Activated CD4-positive, alpha-beta T cell treated with anti-CD3 and anti-CD28 coated beads, Interleukin-2, amount 10 ng/mL, durations not matched to agents 7 days and 5 days (primary cell): ENCODE measurements at regions of chr17 and their contacts with region 1.

Region 1: DNA sequence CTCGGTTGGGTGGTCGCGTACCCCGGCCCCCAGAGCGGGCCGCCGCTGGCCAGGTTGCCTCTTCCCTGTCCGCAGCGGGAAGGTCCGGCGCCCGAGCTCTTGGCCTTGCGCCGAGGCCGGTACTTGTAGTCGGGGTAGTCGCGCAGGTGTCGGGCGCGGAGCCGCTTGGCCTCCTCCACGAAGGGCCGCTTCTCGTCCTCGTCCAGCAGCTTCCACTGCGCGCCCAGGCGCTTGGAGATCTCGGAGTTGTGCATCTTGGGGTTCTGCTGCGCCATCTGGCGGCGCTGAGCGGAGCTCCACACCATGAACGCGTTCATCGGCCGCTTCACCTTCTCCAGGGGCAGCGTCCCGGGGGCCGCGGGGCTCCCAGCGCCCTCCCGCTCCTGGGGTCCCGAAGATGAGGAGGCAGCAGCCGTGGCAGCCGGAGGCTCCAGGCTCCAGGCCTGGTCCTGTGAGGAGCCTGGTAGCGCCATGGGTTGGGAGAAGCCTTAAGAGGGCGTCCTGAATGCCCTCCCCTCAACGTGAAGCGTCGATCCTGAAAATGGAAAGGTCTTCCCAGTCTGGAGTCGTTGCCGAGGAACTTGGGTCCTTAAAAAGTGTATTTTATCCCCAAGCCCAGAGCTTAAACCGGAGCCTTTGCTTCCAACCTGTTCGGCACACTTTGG is 558 bp downstream of the SOX15 start:
- DNase-seq: peak; percentile 74
- H3K4me3 Mint-ChIP-seq: no peak overlapping the region
- H3K27ac Mint-ChIP-seq: no peak overlapping the region
- H3K4me1 Mint-ChIP-seq: peaks cover 19% of the 10 kb centered on the region
- H3K27me3 Mint-ChIP-seq: no peaks in the 10 kb centered on the region

Region 2: GRCh38 chr17:7515911-7516610 is 73.3 kb before region 1 on chr17:
- CTCF ChIA-PET with region 1: interaction called, 18 read pairs
- POLR2A ChIA-PET with region 1: no interaction called
- DNase-seq: no peak
- H3K4me3 Mint-ChIP-seq: no peak overlapping the region
- H3K27ac Mint-ChIP-seq: no peak overlapping the region
- H3K4me1 Mint-ChIP-seq: peaks cover 4% of the 10 kb centered on the region
- H3K27me3 Mint-ChIP-seq: no peaks in the 10 kb centered on the region

Region 3: DNA sequence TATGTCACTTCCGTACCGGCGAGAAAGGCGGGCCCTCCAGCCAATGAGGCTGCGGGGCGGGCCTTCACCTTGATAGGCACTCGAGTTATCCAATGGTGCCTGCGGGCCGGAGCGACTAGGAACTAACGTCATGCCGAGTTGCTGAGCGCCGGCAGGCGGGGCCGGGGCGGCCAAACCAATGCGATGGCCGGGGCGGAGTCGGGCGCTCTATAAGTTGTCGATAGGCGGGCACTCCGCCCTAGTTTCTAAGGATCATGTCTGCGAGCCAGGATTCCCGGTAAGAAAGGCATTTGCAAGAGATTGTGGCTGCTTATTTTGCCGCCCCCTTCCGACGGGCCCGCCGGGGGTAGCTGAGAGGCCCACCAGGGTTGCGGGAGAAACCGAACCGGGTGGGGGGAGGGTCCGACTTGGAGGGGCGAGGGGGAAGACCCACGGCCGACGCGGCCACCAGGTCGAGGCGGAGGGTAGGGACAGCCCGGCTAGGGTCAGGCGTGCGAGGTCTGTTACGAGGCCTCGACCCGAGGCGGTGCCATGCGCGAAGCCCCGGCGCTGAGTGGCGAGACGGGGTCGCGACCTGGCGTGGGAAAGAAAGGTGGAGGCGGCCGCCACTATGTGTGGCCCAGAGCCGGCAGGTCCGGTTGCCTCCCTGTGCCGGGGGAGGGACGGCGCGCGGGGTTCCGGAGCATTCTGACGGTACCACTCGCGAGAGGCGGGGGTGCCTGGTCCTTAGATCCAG is 16.6 kb before region 1 on chr17:
- CTCF ChIA-PET with region 1: interaction called, 10 read pairs
- POLR2A ChIA-PET with region 1: interaction called, 3 read pairs
- DNase-seq: no peak
- H3K4me3 Mint-ChIP-seq: peak overlapping the region; percentile 92
- H3K27ac Mint-ChIP-seq: peak overlapping the region; percentile 98
- H3K4me1 Mint-ChIP-seq: peaks cover 58% of the 10 kb centered on the region
- H3K27me3 Mint-ChIP-seq: no peaks in the 10 kb centered on the region

Region 4: DNA sequence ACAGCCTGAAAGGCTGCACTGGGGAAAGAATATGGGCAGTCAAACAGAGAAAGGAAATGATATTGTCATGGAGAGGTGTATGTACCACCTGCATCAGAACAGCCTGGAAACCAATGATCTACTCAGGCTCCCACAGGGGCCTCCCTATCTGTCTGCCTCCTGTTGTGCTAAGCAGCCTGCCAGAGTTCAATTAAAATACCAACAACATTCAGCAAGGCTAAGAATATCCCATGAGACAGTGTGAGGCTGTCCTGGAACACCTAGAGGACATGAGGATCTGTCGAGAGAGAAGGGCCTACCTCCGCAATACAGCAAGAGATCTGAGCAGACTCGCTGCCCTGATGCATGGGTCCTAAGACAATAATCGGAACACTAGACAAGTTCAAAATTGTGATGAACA is 16.9 kb after region 1 on chr17:
- CTCF ChIA-PET with region 1: interaction called, 16 read pairs
- POLR2A ChIA-PET with region 1: no interaction called
- DNase-seq: no peak
- H3K4me3 Mint-ChIP-seq: no peak overlapping the region
- H3K27ac Mint-ChIP-seq: no peak overlapping the region
- H3K4me1 Mint-ChIP-seq: peaks cover 9% of the 10 kb centered on the region
- H3K27me3 Mint-ChIP-seq: no peaks in the 10 kb centered on the region